Gastrocnemius medialis (tissue), 4 donors: ENCODE measurements at regions of chr11 and their contacts with region 1.

Region 1: GRCh38 chr11:113289431-113290187 is 24.8 kb upstream of the TTC12 start:
- DNase-seq: peak; percentile 18 to 26
- ATAC-seq: peak; percentile 66 to 80
- H3K4me3 ChIP-seq: no peak overlapping the region
- H3K27ac ChIP-seq: no peak overlapping the region
- H3K4me1 ChIP-seq: no peaks in the 10 kb centered on the region
- H3K27me3 ChIP-seq: peaks cover 0 to 4% (median under 1%) of the 10 kb centered on the region in 3 donors
- CTCF ChIP-seq: peak; percentile 76 to 92 (median 83)
- POLR2A ChIP-seq: no peak

Region 2: DNA sequence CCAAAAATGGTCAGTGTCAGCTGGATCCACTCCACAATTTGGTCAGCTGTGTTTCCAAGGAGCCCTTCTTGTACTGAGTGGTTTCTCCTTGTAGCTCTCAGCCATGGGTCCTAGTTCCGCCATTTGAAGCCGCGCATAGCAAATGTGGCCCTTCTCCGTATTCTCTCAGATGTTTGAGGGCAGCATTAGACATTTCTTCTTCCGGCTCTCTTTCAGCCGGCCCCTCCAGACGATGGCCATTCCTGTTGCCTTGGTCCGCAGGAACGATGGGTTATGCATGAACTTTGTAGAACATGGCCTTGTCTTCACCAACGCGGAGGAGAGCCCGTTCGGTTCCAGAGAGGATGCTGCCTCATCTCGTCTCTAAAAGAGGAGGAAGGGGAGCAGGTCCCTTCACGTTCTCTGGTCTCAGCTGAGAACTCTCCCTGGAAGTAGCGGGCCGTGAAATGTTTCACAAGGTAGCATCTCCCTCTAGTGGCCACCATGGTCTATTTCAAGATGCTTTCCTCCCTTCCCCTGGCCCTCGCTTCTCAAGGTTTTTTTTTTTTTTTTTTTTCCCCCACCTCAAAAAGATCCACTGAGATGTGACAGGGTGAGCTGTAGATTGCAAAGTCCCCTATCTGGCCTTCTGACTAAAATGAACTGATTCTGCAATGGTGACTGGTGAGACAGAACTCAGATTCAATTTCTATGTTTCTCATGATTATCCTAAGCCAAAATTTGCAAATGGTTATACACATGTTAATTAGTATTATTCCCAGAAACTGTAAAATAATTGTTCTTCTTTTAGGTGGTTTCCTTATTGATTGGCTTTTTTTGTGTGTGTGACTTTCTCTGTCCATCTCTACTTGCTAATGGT is 1009.1 kb before region 1 on chr11:
- in situ Hi-C with region 1: loop called (anchors 10 to 25 kb)
- intact Hi-C with region 1: no loop called
- DNase-seq: peak; percentile 35 to 59
- ATAC-seq: peak; percentile 84 to 96
- H3K4me3 ChIP-seq: peak overlapping the region; percentile 43 to 67 (median 60)
- H3K27ac ChIP-seq: peak overlapping the region in 1 of 4 donors; percentile 29
- H3K4me1 ChIP-seq: peaks cover 0 to 4% of the 10 kb centered on the region in 2 donors
- H3K27me3 ChIP-seq: no peaks in the 10 kb centered on the region
- CTCF ChIP-seq: peak; percentile 48 to 73 (median 66)
- POLR2A ChIP-seq: no peak

Region 3: GRCh38 chr11:112588252-112588694 is 701.3 kb before region 1 on chr11:
- in situ Hi-C with region 1: loop called (anchors 5 to 10 kb)
- intact Hi-C with region 1: loop called (anchors 2 kb)
- DNase-seq: peak; percentile 40 to 60
- ATAC-seq: peak; percentile 87 to 89
- H3K4me3 ChIP-seq: no peak overlapping the region
- H3K27ac ChIP-seq: no peak overlapping the region
- H3K4me1 ChIP-seq: peaks cover 0 to 8% of the 10 kb centered on the region in 2 donors
- H3K27me3 ChIP-seq: no peaks in the 10 kb centered on the region
- CTCF ChIP-seq: peak; percentile 70 to 79 (median 74)
- POLR2A ChIP-seq: no peak

Region 4: DNA sequence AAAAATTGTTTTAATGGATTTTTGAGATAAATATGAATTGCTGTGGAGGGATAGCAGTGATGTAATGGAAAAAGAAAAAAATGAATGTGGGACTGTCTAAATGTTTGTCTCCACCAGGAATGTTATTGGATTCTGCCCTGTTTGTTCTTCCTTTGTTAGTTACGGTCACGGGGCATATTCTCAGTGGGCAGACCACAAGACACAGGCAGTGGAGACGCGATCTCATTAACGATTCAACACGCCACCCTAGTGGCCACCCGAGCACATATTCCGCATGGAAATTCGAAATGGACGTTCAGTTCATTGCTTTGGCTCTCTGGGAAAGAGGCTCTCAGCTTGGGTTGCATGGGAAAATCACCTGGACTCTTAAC is 127.0 kb before region 1 on chr11:
- in situ Hi-C with region 1: no loop called
- intact Hi-C with region 1: loop called (anchors 10 kb)
- DNase-seq: no peak
- ATAC-seq: peak in 1 of 2 donors; percentile 45
- H3K4me3 ChIP-seq: no peak overlapping the region
- H3K27ac ChIP-seq: peak overlapping the region in 1 of 4 donors; percentile 17
- H3K4me1 ChIP-seq: peaks cover 8 to 34% of the 10 kb centered on the region in 2 donors
- H3K27me3 ChIP-seq: no peaks in the 10 kb centered on the region
- CTCF ChIP-seq: peak in 1 of 5 experiments; percentile 22
- POLR2A ChIP-seq: no peak